Ovary (tissue), 10 donors: ENCODE measurements at regions of chr10 and their contacts with region 1.

Region 1: DNA sequence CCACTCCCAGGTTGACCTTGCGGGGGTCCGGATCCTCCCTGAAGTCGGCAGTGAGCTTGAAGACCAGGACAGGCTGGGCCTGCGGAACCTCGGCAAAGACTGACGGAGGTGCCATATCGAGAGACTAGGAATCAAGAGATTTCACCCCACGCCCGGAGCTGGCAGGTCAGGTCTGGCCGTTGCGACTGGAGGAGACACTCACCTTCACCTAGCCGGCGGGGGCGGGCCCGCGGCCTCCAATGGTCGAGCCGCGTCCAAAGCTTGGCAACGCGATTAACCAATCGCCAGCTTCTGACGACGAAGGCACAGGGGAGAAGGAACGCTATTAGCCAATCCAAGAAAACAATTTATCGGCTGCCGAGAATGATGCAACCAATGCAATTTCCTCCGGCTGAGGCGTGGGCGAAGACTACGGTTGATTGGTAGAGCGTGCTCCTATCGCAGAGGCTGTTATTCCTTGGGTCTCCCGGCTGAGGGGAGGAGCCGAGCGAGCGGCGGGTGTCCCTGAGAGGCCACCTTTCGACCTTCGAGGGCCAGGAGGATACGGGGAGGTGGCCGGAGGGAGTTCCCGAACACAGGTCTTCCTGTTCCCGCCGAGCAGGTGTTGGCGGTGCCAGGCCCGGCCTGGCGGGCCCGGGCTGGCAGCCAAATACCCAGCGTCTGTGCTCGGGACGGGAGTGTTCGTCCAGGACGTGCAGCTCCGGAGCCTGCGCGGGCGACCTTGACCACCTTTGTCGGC is at the start of gene GOT1:
- DNase-seq: peak; percentile 92 to 96 (median 93)
- H3K4me3 ChIP-seq: peak within 1 kb of the TSS; percentile 48
- H3K27ac ChIP-seq: peak within 1 kb of the TSS; percentile 57 to 82
- H3K4me1 ChIP-seq: peaks cover 7% of the 10 kb centered on the region
- H3K27me3 ChIP-seq: no peaks in the 10 kb centered on the region
- CTCF ChIP-seq: no peak
- EP300 ChIP-seq: no peak
- POLR2A ChIP-seq: peak; percentile 78
- total RNA-seq, gene GOT1: 12.5 to 80.4 (median 18.2) TPM

Region 2: DNA sequence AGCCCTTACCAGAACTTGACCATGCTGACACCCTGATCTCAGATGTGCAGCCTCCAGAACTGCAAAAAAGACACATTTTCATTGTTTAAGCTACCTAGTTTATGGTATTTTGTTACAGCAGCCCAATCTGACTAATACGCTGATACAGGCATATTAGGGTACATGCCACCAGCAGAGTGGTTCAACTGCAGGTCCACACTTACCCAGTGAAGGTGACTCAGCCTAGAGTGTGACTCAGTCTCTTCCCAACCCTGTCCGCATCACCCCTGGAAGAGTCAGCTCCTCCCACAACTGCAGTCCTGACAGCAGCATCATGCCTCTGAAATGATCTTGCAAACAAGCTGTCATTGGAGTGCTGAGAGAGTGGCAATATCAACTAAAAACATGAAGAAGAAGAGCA is 30.6 kb after region 1 on chr10:
- intact Hi-C with region 1: no loop called
- DNase-seq: no peak
- H3K4me3 ChIP-seq: no peak overlapping the region
- H3K27ac ChIP-seq: no peak overlapping the region
- H3K4me1 ChIP-seq: peaks cover 3% of the 10 kb centered on the region
- H3K27me3 ChIP-seq: no peaks in the 10 kb centered on the region
- CTCF ChIP-seq: no peak
- EP300 ChIP-seq: no peak
- POLR2A ChIP-seq: no peak

Region 3: DNA sequence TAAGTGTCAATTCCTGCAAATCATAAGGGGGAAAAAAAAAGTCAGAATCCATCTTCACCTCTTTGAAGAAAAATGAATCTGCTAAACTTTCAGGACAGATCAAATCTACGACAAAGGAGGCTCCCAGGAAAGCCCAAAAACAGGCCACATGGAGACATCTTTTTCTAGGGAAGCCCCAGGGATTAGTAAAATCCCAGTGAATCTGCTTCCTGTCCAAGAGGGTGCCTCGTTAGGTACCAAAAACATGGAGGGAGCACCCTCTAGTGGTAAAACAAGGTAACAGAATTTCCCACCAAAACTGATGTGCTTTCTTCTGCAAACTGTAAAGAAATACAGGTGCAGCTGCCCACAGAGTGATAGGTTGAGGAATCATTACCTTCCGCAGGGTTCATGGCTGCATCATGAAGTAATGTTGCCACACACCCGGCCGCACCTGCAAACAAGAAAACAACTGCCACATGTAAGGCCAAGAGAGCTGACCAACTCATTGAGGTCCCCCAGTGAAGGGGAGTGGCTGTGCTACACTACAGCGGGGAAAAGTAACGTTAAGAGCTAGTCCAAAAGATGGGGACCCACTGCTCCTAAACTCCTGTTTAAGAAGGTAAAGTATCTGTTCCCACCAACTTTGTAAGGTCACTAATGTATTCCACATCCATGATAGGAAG is 181.7 kb after region 1 on chr10:
- intact Hi-C with region 1: loop called in 2 of 4 experiments (anchors 5 to 10 kb)
- DNase-seq: peak in 1 of 5 donors; percentile 27
- H3K4me3 ChIP-seq: no peak overlapping the region
- H3K27ac ChIP-seq: no peak overlapping the region
- H3K4me1 ChIP-seq: peaks cover 2% of the 10 kb centered on the region
- H3K27me3 ChIP-seq: no peaks in the 10 kb centered on the region
- CTCF ChIP-seq: peak; percentile 36 to 71 (median 62)
- EP300 ChIP-seq: no peak
- POLR2A ChIP-seq: no peak

Region 4: GRCh38 chr10:99620713-99621453 is 190.3 kb after region 1 on chr10:
- intact Hi-C with region 1: loop called in 3 of 4 experiments (anchors 2 to 10 kb)
- DNase-seq: peak; percentile 95 to 97 (median 96)
- H3K4me3 ChIP-seq: peak overlapping the region; percentile 88
- H3K27ac ChIP-seq: peak overlapping the region; percentile 83 to 99
- H3K4me1 ChIP-seq: peaks cover 7% of the 10 kb centered on the region
- H3K27me3 ChIP-seq: no peaks in the 10 kb centered on the region
- CTCF ChIP-seq: no peak
- EP300 ChIP-seq: peak; percentile 90
- POLR2A ChIP-seq: peak; percentile 64

Region 5: DNA sequence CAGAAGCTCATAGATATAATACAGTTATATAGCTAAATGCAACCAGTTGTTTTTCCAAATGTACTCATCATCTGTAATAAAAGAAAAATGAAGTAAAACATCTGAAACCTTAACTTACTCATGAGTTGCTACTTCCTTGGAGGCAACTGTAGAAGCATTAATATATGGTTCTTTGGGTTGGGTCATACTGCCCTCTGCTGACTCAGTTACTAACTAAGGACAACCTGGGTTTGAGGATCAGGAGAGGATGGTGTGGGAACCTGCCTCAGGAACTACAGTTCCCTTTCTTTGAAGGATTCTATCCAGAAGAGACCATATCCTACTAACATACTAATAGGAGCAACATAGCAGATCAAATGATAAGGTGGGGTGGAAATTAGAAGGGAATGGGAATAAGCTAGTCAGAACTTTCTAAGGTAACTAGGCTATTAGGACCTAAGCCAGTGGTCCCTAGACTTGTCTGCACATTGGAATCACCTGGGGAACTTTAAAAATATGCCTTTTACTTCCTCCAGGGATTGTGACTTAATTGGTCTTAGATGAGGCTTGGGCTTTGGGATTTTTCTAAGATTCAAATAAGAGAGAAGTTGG is 280.6 kb after region 1 on chr10:
- intact Hi-C with region 1: loop called in 1 of 4 experiments (anchors 10 kb)
- DNase-seq: peak in 2 of 5 donors; percentile 28 to 38
- H3K4me3 ChIP-seq: no peak overlapping the region
- H3K27ac ChIP-seq: no peak overlapping the region
- H3K4me1 ChIP-seq: peaks cover 3% of the 10 kb centered on the region
- H3K27me3 ChIP-seq: no peaks in the 10 kb centered on the region
- CTCF ChIP-seq: peak in 2 of 3 donors; percentile 10 to 18
- EP300 ChIP-seq: no peak
- POLR2A ChIP-seq: no peak

Region 6: DNA sequence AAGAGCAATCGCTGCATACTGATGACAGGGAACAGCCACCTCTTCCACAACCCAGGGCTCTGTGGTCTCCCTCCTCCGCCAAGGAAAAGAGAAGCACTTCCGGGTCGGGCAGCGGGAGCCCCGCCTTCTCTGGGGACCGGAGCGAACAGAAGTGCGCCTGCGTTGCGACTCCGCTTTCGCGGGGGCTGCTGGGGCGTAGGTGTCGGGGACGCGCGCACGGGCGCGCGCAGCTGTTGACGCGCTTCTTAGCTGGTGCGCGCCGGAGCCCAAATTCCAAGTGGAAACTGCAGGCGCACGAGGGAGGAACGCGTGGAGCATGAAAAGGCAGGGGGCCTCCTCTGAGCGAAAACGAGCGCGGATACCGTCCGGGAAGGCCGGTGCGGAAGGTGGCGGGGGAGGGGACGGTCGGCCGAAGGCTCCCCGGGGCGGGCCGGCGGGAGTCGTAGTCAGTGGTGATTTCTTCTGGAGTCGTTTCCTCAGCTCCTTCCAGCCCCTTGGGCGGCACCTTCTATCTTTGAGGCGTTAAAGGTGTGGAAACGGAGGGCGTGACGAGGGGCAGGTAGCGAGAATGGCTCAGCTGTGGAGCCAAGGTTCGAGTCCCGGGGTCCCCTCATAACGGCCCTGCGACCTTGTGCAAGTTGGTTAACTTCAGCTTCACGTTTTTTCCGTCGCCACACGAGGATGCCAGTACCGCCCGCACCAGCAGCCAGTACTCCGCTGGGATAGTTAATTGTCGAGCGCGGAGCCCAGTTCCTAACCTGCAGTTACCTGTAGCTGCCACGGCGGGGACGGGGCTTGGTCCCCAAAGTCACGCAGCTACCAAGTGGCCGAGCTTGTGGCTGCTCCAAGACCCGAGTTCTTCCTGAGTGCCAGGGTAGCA is 301.7 kb after region 1 on chr10 and contains the starts of genes COX15 and CUTC:
- intact Hi-C with region 1: loop called in 1 of 4 experiments (anchors 10 kb)
- DNase-seq: peak; percentile 96 to 99 (median 97)
- H3K4me3 ChIP-seq: peak within 1 kb of the TSS; percentile 78
- H3K27ac ChIP-seq: peak within 1 kb of the TSS; percentile 82 to 91
- H3K4me1 ChIP-seq: peaks cover 6% of the 10 kb centered on the region
- H3K27me3 ChIP-seq: no peaks in the 10 kb centered on the region
- CTCF ChIP-seq: peak in 1 of 3 donors; percentile 25
- EP300 ChIP-seq: no peak
- POLR2A ChIP-seq: peak; percentile 60
- total RNA-seq, gene COX15: 25.2 to 39.7 (median 36.5) TPM
- total RNA-seq, gene CUTC: 12.4 to 15.0 (median 13.9) TPM

Region 7: GRCh38 chr10:100286051-100287033 is 855.7 kb after region 1 on chr10 and contains the start of gene BLOC1S2:
- intact Hi-C with region 1: loop called in 1 of 4 experiments (anchors 5 kb)
- DNase-seq: peak; percentile 84 to 92 (median 88)
- H3K4me3 ChIP-seq: peak within 1 kb of the TSS; percentile 93
- H3K27ac ChIP-seq: peak within 1 kb of the TSS in 1 of 2 donors; percentile 67
- H3K4me1 ChIP-seq: peaks cover 2% of the 10 kb centered on the region
- H3K27me3 ChIP-seq: no peaks in the 10 kb centered on the region
- CTCF ChIP-seq: peak in 1 of 3 donors; percentile 22
- EP300 ChIP-seq: no peak
- POLR2A ChIP-seq: peak; percentile 78
- total RNA-seq, gene BLOC1S2: 14.4 to 34.4 (median 24.6) TPM